Posterior cingulate gyrus (tissue), 11 donors: ENCODE measurements at regions of chr1 and their contacts with region 1.

Region 1: GRCh38 chr1:204565617-204566582 is 49.7 kb downstream of the MDM4 start:
- DNase-seq: peak in 8 of 10 donors; percentile 39 to 91 (median 62)

Region 2: GRCh38 chr1:204763706-204764427 is 198.0 kb after region 1 on chr1:
- intact Hi-C with region 1: loop called (anchors 1 kb)
- DNase-seq: peak; percentile 43 to 97 (median 78)